ENCODE measurements at regions of chr1 and their contacts with region 1.

Region 1: GRCh38 chr1:113871597-113872113 is at the start of gene PTPN22:
- DNase-seq: peak; percentile 88
- ATAC-seq: peak; percentile 93
- H3K4me3 ChIP-seq: peak within 1 kb of the TSS; percentile 52 to 72 (median 66)
- H3K4me3 Mint-ChIP-seq: peak within 1 kb of the TSS; percentile 92
- H3K27ac ChIP-seq: peak within 1 kb of the TSS; percentile 84 to 91
- H3K27ac Mint-ChIP-seq: peak within 1 kb of the TSS; percentile 96
- H3K4me1 ChIP-seq: peaks cover 50 to 52% of the 10 kb centered on the region in 2 donors
- H3K4me1 Mint-ChIP-seq: peaks cover 67% of the 10 kb centered on the region
- H3K27me3 ChIP-seq: no peaks in the 10 kb centered on the region
- H3K27me3 Mint-ChIP-seq: no peaks in the 10 kb centered on the region
- CTCF ChIP-seq: no peak
- total RNA-seq, gene PTPN22: 34.4 and 37.4 TPM in 2 replicates

Region 2: GRCh38 chr1:113859478-113860175 is 12.0 kb before region 1 on chr1:
- CTCF ChIA-PET with region 1: interaction called, 15 read pairs
- POLR2A ChIA-PET with region 1: interaction called, 10 read pairs
- intact Hi-C with region 1: loop called (anchors 1 kb)
- DNase-seq: peak; percentile 79
- ATAC-seq: peak; percentile 80
- H3K4me3 ChIP-seq: peak overlapping the region; percentile 5 to 58 (median 31)
- H3K4me3 Mint-ChIP-seq: peak overlapping the region; percentile 72
- H3K27ac ChIP-seq: peak overlapping the region; percentile 73 to 80
- H3K27ac Mint-ChIP-seq: peak overlapping the region; percentile 92
- H3K4me1 ChIP-seq: peaks cover 58 to 60% of the 10 kb centered on the region in 2 donors
- H3K4me1 Mint-ChIP-seq: peaks cover 58% of the 10 kb centered on the region
- H3K27me3 ChIP-seq: no peaks in the 10 kb centered on the region
- H3K27me3 Mint-ChIP-seq: no peaks in the 10 kb centered on the region
- CTCF ChIP-seq: no peak

Region 3: DNA sequence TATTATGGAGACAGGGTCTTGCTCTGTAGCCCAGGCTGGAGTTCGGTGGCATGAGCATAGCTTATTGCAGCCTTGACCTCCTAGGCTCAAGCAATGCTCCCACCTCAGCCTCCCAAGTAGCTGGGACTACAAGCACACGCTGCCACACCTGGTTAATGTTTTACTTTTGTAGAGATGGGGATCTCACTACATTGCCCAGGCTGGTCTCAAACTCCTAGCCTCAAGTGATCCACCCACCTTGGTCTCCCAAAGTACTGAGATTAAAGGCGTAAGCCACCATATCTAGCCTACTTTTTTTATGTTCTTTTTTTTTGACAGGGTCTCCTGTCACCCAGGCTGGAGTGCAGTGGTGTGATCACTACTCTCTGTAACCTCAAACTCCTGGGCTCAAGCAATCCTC is 21.6 kb after region 1 on chr1:
- CTCF ChIA-PET with region 1: interaction called, 5 read pairs
- POLR2A ChIA-PET with region 1: interaction called, 17 read pairs
- intact Hi-C with region 1: no loop called
- DNase-seq: no peak
- ATAC-seq: no peak
- H3K4me3 ChIP-seq: no peak overlapping the region
- H3K4me3 Mint-ChIP-seq: no peak overlapping the region
- H3K27ac ChIP-seq: peak overlapping the region in 1 of 2 donors; percentile 38
- H3K27ac Mint-ChIP-seq: peak overlapping the region; percentile 26
- H3K4me1 ChIP-seq: no peaks in the 10 kb centered on the region
- H3K4me1 Mint-ChIP-seq: peaks cover under 1% of the 10 kb centered on the region
- H3K27me3 ChIP-seq: no peaks in the 10 kb centered on the region
- H3K27me3 Mint-ChIP-seq: no peaks in the 10 kb centered on the region
- CTCF ChIP-seq: no peak

Region 4: GRCh38 chr1:113928941-113929749 is 57.5 kb after region 1 on chr1 and contains the start of gene HIPK1:
- CTCF ChIA-PET with region 1: no interaction called
- POLR2A ChIA-PET with region 1: interaction called, 3 read pairs
- intact Hi-C with region 1: loop called (anchors 1 kb)
- DNase-seq: peak; percentile 96
- ATAC-seq: peak; percentile 75
- H3K4me3 ChIP-seq: peak within 1 kb of the TSS; percentile 76 to 92 (median 86)
- H3K4me3 Mint-ChIP-seq: peak within 1 kb of the TSS; percentile 100
- H3K27ac ChIP-seq: peak within 1 kb of the TSS; percentile 98 to 99
- H3K27ac Mint-ChIP-seq: peak within 1 kb of the TSS; percentile 100
- H3K4me1 ChIP-seq: peaks cover 33 to 35% of the 10 kb centered on the region in 2 donors
- H3K4me1 Mint-ChIP-seq: peaks cover 49% of the 10 kb centered on the region
- H3K27me3 ChIP-seq: no peaks in the 10 kb centered on the region
- H3K27me3 Mint-ChIP-seq: no peaks in the 10 kb centered on the region
- CTCF ChIP-seq: no peak
- total RNA-seq, gene HIPK1: 48.0 and 48.2 TPM in 2 replicates